Activated naive CD8-positive, alpha-beta T cell treated with anti-CD3 and anti-CD28 coated beads, Interleukin-2, amount 10 ng/mL, durations not matched to agents 7 days and 5 days (primary cell): ENCODE measurements at regions of chr19 and their contacts with region 1.

Region 1: DNA sequence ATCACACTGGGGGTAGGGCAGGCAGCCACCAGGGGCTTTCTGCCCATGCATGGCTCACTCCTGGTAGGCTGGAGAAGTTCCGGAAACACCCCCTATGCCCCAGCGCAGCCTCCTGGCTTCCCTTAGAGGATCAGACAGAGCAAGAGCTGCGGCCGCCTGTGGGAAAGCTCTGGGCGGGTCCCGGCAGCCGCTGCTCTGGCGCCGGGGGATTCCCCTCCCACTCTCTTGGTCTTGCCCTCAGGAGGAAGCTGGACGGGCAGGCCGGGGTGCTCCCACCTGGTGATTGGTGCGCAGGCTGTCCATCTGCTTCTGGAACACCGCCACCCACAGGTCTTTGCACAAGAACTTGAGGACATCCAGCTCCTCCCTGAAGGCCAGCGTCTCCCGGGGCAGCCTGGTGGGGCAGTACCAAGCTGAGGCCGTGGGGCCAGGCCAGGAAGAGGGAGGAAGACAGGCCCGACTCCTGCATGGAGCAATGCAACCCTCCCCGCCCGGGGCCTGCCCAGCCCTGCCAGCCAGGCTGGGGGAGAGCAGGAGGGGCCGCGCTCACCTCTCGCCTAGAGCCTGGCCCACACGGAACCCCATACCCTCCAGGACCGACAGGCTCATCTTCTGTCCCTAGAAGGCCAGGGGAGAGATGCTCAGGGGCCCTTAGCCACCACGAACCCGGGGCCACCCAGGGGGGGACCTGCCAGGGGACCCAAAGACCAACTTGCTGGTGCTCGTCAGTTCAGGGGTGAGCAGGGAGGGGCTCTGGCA is 4.0 kb upstream of the NKPD1 start:
- DNase-seq: peak; percentile 74
- ATAC-seq: peak; percentile 83
- H3K4me3 Mint-ChIP-seq: peak overlapping the region; percentile 48
- H3K27ac Mint-ChIP-seq: peak overlapping the region; percentile 83
- H3K4me1 Mint-ChIP-seq: peaks cover 14% of the 10 kb centered on the region
- H3K27me3 Mint-ChIP-seq: no peaks in the 10 kb centered on the region

Region 2: GRCh38 chr19:44689056-44689895 is 475.5 kb before region 1 on chr19:
- POLR2A ChIA-PET with region 1: no interaction called
- DNase-seq: peak; percentile 85
- ATAC-seq: peak; percentile 25
- H3K4me3 Mint-ChIP-seq: no peak overlapping the region
- H3K27ac Mint-ChIP-seq: peak overlapping the region; percentile 61
- H3K4me1 Mint-ChIP-seq: peaks cover 39% of the 10 kb centered on the region
- H3K27me3 Mint-ChIP-seq: peaks cover 21% of the 10 kb centered on the region

Region 3: GRCh38 chr19:45152504-45153338 is 12.0 kb before region 1 on chr19:
- POLR2A ChIA-PET with region 1: interaction called, 11 read pairs
- DNase-seq: peak; percentile 70
- ATAC-seq: peak; percentile 75
- H3K4me3 Mint-ChIP-seq: peak overlapping the region; percentile 64
- H3K27ac Mint-ChIP-seq: peak overlapping the region; percentile 63
- H3K4me1 Mint-ChIP-seq: peaks cover 19% of the 10 kb centered on the region
- H3K27me3 Mint-ChIP-seq: peaks cover 34% of the 10 kb centered on the region

Region 4: GRCh38 chr19:45215383-45216191 is 50.8 kb after region 1 on chr19:
- POLR2A ChIA-PET with region 1: no interaction called
- DNase-seq: no peak
- ATAC-seq: no peak
- H3K4me3 Mint-ChIP-seq: no peak overlapping the region
- H3K27ac Mint-ChIP-seq: no peak overlapping the region
- H3K4me1 Mint-ChIP-seq: peaks cover 11% of the 10 kb centered on the region
- H3K27me3 Mint-ChIP-seq: peaks cover 55% of the 10 kb centered on the region

Region 5: DNA sequence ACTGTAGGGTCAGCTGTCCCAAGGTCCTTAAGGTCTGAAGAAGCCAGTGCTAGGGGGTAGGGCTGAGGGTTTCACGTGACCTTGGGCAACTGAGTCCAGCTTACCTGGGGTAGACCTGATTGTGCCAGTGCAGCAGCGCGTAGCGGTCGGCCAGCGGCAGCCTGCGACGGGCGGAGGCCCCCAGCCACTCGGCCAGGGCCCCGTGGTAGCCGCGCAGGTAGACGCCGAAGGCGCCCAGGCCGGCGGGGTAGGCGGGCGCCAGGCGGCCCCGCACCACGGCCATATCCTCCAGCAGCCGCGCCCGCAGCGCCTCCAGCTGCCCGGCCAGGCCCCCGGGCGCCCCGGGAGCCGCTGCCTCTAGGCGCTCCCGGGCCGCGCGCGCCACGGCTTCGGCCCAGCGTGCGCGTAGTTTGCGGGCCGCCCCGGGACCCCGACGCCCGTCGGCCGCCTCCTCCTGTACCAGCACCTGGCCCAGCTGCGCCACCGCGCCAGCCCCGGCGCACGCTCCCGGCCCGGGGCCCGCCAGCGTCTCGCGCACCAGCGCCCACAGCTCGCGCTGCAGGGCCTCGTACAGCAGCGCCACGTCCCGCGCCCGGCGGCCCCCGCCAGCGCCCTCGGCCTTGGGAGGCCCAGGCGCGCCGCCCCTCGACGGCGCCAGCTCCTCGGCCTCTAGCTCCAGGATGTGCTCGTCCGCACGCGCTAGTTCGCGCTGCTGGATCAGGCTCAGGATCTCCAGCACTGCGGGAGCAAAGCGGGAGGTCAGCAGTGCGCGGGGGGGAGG is 69.5 kb after region 1 on chr19:
- POLR2A ChIA-PET with region 1: no interaction called
- DNase-seq: no peak
- ATAC-seq: no peak
- H3K4me3 Mint-ChIP-seq: no peak overlapping the region
- H3K27ac Mint-ChIP-seq: no peak overlapping the region
- H3K4me1 Mint-ChIP-seq: peaks cover 6% of the 10 kb centered on the region
- H3K27me3 Mint-ChIP-seq: peaks cover 42% of the 10 kb centered on the region